ENCODE measurements at regions of chr1 and their contacts with region 1.

Region 1: GRCh38 chr1:223109581-223110026 is 33.4 kb downstream of the TLR5 start:
- DNase-seq: no peak
- H3K4me3 ChIP-seq: no peak overlapping the region
- H3K27ac ChIP-seq: no peak overlapping the region
- H3K4me1 ChIP-seq: peaks cover 3% of the 10 kb centered on the region
- H3K27me3 ChIP-seq: no peaks in the 10 kb centered on the region
- CTCF ChIP-seq: no peak
- EP300 ChIP-seq: no peak
- POLR2A ChIP-seq: no peak

Region 2: DNA sequence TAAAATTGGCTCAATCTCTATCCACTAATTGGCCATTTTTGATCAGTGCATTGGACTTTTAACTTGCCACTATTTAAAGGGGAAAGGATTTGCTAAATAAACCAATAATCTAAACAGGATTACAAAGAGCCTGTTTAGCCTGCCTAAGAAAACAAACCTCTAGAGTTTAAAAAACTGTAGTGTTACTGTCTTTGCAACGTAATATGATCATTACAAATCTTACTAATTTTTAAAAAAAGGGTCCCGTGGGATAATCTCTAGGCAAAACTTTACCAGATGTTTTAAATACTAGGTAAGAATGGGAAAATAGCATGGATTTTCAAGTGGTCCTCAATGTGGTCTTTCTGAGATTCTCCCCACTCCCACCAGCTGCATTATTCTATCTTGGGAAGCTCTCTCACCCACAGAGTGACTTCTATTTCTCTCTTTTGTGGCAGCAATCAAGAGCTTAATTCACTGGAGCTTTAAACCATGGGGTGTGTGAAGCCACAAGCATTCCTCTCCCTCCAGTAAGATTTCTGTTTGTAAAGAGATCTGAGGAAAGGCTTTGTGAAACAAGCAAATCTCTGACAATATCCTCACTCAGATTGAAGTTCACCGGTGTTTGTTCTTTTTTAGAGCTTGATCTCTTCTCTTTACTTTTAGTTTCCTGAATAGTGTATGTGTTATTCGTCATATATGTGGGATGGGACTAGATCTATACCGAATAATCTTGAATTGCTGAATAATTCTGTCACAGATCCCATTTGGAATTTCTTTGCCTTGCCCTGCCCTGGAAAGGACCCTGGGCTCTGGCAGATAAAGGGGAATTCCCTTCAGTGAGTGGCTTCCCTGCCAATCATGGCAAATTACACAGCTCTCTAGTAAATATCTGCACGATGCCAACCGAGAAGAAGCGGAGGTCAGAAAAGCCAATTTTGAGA is 98.8 kb before region 1 on chr1:
- intact Hi-C with region 1: no loop called
- DNase-seq: no peak
- H3K4me3 ChIP-seq: no peak overlapping the region
- H3K27ac ChIP-seq: no peak overlapping the region
- H3K4me1 ChIP-seq: peaks cover 1% of the 10 kb centered on the region
- H3K27me3 ChIP-seq: no peaks in the 10 kb centered on the region
- CTCF ChIP-seq: no peak
- EP300 ChIP-seq: no peak
- POLR2A ChIP-seq: no peak

Region 3: GRCh38 chr1:224544346-224545110 is 1434.9 kb after region 1 on chr1:
- intact Hi-C with region 1: loop called in 1 of 4 experiments (anchors 5 kb)
- DNase-seq: no peak
- H3K4me3 ChIP-seq: no peak overlapping the region
- H3K27ac ChIP-seq: no peak overlapping the region
- H3K4me1 ChIP-seq: no peaks in the 10 kb centered on the region
- H3K27me3 ChIP-seq: no peaks in the 10 kb centered on the region
- CTCF ChIP-seq: no peak
- EP300 ChIP-seq: no peak
- POLR2A ChIP-seq: no peak